Heart right ventricle (tissue), 16 donors: ENCODE measurements at regions of chr9 and their contacts with region 1.

Region 1: DNA sequence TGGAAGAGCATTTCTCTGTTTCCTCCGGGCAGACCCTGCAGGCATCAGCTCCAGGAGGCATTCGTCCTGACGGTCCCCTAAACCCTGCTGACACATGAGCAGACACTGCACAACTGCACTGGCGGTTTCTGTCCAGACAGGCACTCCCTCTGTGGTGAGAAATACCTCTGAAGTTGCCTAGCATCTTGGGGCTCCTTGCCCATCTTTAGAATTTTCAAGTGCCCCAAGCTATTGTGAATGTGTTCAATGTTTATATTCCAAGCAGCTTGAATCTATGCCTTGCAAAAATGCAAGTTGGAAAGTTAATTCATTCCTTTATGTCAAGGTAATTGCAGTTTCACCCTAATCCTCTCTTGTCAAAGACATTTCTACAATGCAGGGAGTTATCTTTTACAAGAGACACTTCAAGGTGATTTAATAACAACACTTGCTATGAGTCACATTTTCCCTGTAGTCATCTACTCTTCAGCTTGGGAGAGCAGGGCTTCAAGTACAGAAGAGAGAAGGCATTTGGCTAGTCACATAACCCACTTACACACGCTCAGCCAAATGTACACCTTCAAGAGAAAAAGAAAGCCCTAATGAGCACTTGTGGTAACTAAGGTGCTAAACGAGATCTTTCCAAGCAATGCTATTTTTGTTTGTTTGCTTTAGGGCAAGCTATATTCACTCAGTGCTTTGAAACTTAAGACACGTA is 302.5 kb downstream of the MLLT3 start:
- DNase-seq: no peak
- ATAC-seq: peak in 1 of 8 donors; percentile 81
- H3K4me3 ChIP-seq: no peak overlapping the region
- H3K27ac ChIP-seq: no peak overlapping the region
- H3K4me1 ChIP-seq: peaks cover 0 to 11% (median 4%) of the 10 kb centered on the region in 9 donors
- H3K27me3 ChIP-seq: no peaks in the 10 kb centered on the region
- CTCF ChIP-seq: no peak

Region 2: DNA sequence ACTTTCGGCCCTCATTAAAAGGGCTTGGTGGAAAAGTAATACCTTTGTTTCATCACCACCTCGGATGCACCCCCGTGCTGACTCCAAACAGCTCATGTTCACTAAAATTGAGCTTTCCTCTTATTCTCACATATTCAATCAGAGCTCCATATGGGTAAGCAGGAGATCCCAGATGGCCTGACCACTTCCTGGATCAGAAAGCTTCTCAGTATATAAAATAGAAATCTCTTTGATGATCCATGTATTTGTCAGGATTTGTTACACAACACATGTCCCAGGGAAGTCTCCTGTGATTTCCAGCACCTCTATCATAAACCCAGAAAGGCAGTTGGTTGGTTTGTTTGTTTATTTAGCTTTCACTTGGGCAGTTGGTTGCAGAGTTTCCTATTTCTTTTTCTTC is 99.5 kb before region 1 on chr9:
- intact Hi-C with region 1: loop called in 1 of 10 experiments (anchors 10 kb)
- DNase-seq: no peak
- ATAC-seq: no peak
- H3K4me3 ChIP-seq: no peak overlapping the region
- H3K27ac ChIP-seq: no peak overlapping the region
- H3K4me1 ChIP-seq: no peaks in the 10 kb centered on the region
- H3K27me3 ChIP-seq: no peaks in the 10 kb centered on the region
- CTCF ChIP-seq: no peak

Region 3: DNA sequence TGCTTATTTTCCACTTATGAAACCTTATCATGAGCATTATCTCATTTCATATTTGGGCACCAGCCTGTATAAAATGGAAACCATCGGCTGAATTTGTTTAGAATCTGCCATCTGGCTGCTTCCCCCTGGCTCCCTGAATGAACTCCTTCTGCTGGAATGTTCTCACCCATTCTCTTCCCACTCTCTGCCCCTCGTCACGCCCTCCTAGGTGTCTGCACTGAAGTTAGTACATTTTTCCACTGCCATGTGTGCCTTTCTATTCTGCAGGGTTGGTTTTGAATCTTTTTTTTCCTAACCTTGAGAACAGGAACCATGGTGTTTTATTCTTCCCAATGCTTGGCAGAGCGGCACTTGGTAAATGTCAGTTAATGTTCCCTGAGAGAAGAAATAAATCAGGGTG is 57.2 kb before region 1 on chr9:
- intact Hi-C with region 1: loop called in 1 of 10 experiments (anchors 10 kb)
- DNase-seq: no peak
- ATAC-seq: no peak
- H3K4me3 ChIP-seq: no peak overlapping the region
- H3K27ac ChIP-seq: no peak overlapping the region
- H3K4me1 ChIP-seq: no peaks in the 10 kb centered on the region
- H3K27me3 ChIP-seq: no peaks in the 10 kb centered on the region
- CTCF ChIP-seq: no peak